Aorta (tissue), 5 donors: ENCODE measurements at regions of chr21 and their contacts with region 1.

Region 1: GRCh38 chr21:46285761-46286496 is at the start of gene YBEY:
- DNase-seq: peak; percentile 94 to 96
- ATAC-seq: peak; percentile 97
- H3K4me3 ChIP-seq: peak within 1 kb of the TSS; percentile 63 to 92
- H3K27ac ChIP-seq: peak within 1 kb of the TSS in 1 of 2 donors; percentile 93
- H3K4me1 ChIP-seq: peaks cover 0 to 7% of the 10 kb centered on the region in 2 donors
- H3K27me3 ChIP-seq: no peaks in the 10 kb centered on the region
- total RNA-seq, gene YBEY: 7.7 to 11.3 TPM

Region 2: DNA sequence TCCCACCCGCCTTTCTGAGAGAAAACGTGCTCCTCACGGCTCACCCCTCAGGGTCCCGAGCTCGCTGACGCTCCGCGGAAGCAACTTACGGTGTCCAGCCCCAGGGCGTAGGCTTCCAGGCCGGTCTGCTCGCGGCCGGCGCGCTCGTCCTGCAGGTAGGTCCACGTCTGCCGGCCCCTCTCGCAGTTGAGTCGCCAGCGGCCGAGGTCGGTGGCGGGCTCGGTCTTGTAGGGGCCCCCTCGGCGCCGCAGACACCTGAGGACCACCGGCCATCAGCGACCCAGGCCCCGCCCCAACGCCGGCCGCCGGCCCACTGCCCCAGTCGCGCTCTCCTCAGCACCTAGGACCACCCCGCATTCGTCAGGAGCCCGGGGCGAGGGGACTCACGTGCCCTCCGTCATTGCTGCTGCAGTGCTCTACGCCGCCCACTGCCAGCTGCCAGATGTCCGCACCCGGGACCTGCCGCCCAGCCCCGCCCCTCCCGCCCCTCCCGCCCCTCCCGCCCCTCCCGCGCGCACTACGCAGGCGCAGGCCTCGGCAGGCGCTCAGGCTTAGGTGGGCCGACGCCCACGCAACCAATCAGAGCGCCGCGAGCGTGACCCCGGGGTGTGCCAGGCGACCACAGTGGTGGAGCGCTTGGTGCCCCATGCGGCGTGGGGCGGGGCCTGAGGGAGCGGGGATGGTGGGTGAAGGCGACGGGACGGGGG is 57.4 kb before region 1 on chr21 and contains the start of gene LSS:
- intact Hi-C with region 1: loop called in 1 of 2 experiments (anchors 5 kb)
- DNase-seq: peak; percentile 99 to 100
- ATAC-seq: peak; percentile 96
- H3K4me3 ChIP-seq: peak within 1 kb of the TSS; percentile 69 to 95
- H3K27ac ChIP-seq: peak within 1 kb of the TSS; percentile 20 to 76
- H3K4me1 ChIP-seq: peaks cover 0 to 3% of the 10 kb centered on the region in 2 donors
- H3K27me3 ChIP-seq: no peaks in the 10 kb centered on the region
- total RNA-seq, gene LSS: 60.2 to 85.2 TPM